ENCODE measurements at regions of chr1 and their contacts with region 1.

Region 1: DNA sequence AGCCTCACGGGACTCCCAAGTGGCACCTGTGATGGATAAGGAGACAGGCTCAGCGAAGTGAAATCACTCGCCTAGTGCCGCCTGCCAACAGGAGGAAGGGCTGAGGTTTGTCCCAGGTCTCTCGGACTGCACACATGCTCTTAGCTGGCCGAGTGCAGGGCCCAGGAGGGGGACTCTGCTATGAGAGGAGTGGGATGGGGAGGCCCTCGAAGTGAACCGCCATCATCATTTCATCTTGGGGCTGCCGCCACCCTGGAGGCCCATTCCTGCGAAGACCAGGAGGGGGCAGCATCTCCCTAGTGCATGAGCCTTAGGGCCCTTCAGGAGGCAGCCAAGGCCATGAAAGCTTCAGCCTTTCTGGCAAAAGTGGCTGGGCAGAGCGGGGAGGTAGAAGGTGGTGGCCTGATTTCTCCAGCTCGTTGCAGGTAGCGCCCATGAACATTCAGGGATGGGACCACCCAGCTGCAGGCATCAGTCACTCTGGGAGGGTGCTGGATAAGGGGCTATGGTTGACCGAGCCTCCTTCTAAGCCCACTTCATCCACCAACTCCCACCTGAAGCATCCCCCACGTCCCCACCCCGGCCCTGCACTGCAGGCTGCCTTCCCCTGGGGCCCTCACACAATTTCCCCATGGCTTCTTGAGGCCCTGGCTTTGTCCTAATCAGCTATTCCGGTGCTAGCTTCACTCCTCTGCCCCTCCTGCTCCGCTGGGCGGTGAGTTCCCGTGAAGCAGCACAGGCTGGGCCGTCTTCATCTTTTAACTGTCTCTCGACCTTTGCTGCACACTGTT is 17.2 kb upstream of the RASSF5 start:
- DNase-seq: peak; percentile 63 to 82
- H3K4me3 ChIP-seq: no peak overlapping the region
- H3K4me3 Mint-ChIP-seq: no peak overlapping the region
- H3K27ac Mint-ChIP-seq: no peak overlapping the region
- H3K4me1 ChIP-seq: peaks cover 3% of the 10 kb centered on the region; the same call in 1 of the 2 replicates
- H3K4me1 Mint-ChIP-seq: peaks cover 4% of the 10 kb centered on the region
- H3K27me3 ChIP-seq: no peaks in the 10 kb centered on the region
- H3K27me3 Mint-ChIP-seq: no peaks in the 10 kb centered on the region
- CTCF ChIP-seq: peak; percentile 90 to 95

Region 2: GRCh38 chr1:206419250-206419649 is 70.9 kb before region 1 on chr1:
- CTCF ChIA-PET with region 1: no interaction called
- POLR2A ChIA-PET with region 1: no interaction called
- intact Hi-C with region 1: no loop called
- DNase-seq: no peak
- H3K4me3 ChIP-seq: no peak overlapping the region
- H3K4me3 Mint-ChIP-seq: no peak overlapping the region
- H3K27ac Mint-ChIP-seq: no peak overlapping the region
- H3K4me1 ChIP-seq: peaks cover 5% of the 10 kb centered on the region; the same call in 1 of the 2 replicates
- H3K4me1 Mint-ChIP-seq: peaks cover 7% of the 10 kb centered on the region
- H3K27me3 ChIP-seq: no peaks in the 10 kb centered on the region
- H3K27me3 Mint-ChIP-seq: no peaks in the 10 kb centered on the region
- CTCF ChIP-seq: no peak

Region 3: GRCh38 chr1:206479183-206480125 is 10.7 kb before region 1 on chr1:
- CTCF ChIA-PET with region 1: interaction called, 10 read pairs
- POLR2A ChIA-PET with region 1: no interaction called
- intact Hi-C with region 1: no loop called
- DNase-seq: peak; percentile 65 to 68
- H3K4me3 ChIP-seq: no peak overlapping the region
- H3K4me3 Mint-ChIP-seq: no peak overlapping the region
- H3K27ac Mint-ChIP-seq: no peak overlapping the region
- H3K4me1 ChIP-seq: no peaks in the 10 kb centered on the region
- H3K4me1 Mint-ChIP-seq: no peaks in the 10 kb centered on the region
- H3K27me3 ChIP-seq: no peaks in the 10 kb centered on the region
- H3K27me3 Mint-ChIP-seq: no peaks in the 10 kb centered on the region
- CTCF ChIP-seq: peak; percentile 83 to 85

Region 4: DNA sequence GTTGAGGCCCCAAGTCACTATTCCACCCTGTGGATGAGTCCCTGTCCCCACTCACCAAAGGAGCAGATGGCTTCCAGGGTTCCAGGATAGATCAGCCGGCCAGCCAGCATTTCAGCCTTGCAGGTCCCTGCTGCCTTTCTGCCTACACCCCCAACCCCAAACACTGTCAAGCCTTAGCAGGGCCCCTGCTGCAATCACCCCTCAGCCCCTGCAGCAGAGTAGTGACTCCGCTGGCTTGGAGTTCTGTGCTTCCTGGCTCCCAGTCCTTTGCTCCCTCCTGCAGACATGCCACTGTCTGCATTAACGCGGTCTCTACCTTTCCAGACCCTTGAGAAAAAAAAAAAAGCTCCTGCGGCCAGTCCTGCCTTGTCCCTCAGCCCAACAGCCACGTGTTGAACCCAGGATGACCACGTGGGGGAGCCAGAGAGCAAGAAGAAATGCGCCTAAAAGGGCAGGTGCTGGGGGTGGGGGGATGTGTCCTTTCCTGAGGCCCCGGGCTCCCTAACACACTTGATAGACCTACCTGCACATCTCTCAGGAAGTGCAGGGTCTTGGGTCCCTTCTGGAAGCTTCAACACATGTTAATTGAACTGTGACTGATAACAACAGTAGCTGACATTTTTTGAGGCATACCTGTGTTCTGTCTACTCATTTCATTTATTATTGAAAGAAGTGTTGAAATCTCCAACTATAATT is 54.5 kb after region 1 on chr1:
- CTCF ChIA-PET with region 1: interaction called, 7 read pairs
- POLR2A ChIA-PET with region 1: no interaction called
- intact Hi-C with region 1: loop called (anchors 1 kb)
- DNase-seq: peak; percentile 77 to 89
- H3K4me3 ChIP-seq: no peak overlapping the region
- H3K4me3 Mint-ChIP-seq: no peak overlapping the region
- H3K27ac Mint-ChIP-seq: no peak overlapping the region
- H3K4me1 ChIP-seq: no peaks in the 10 kb centered on the region
- H3K4me1 Mint-ChIP-seq: no peaks in the 10 kb centered on the region
- H3K27me3 ChIP-seq: no peaks in the 10 kb centered on the region
- H3K27me3 Mint-ChIP-seq: peaks cover 7% of the 10 kb centered on the region
- CTCF ChIP-seq: peak; percentile 80 to 94

Region 5: DNA sequence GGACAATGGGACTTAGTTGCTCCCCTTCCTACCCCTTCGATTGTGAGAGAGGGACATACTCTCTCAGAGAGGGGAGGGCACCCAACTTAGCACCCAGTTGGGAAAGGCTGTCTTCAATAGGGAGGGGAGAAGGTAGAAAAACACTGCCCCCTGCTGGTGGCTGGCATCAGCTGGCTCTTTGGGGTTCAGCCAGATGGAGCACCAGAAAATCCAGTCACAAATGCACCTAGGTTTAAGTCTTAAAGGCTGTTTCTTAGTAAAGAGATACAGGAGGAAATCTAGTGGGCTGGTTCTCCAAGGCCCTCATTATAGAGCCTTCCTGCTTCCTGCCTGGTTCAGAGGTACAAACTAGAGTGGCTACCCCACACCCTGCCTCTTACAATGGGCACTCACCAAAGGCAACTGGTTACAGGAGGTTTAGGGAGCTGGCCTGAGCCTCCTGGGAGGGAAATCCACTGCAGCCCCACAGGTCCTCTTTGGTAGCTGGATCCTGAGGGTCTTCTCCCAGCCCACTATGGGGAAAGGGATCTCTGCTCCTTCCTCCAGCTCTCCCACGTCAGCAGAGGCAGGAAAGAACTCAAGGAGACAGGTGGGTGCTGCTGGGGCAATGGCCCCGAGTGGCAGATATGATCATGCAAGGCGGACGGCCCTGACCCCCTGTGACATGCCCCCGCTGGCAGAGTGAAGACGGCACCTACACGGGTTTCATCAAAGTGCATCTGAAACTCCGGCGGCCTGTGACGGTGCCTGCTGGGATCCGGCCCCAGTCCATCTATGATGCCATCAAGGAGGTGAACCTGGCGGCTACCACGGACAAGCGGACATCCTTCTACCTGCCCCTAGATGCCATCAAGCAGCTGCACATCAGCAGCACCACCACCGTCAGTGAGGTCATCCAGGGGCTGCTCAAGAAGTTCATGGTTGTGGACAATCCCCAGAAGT is 93.8 kb after region 1 on chr1:
- CTCF ChIA-PET with region 1: interaction called, 20 read pairs
- POLR2A ChIA-PET with region 1: no interaction called
- intact Hi-C with region 1: loop called (anchors 1 kb)
- DNase-seq: peak; percentile 65 to 78
- H3K4me3 ChIP-seq: no peak overlapping the region
- H3K4me3 Mint-ChIP-seq: no peak overlapping the region
- H3K27ac Mint-ChIP-seq: no peak overlapping the region
- H3K4me1 ChIP-seq: no peaks in the 10 kb centered on the region
- H3K4me1 Mint-ChIP-seq: no peaks in the 10 kb centered on the region
- H3K27me3 ChIP-seq: no peaks in the 10 kb centered on the region
- H3K27me3 Mint-ChIP-seq: no peaks in the 10 kb centered on the region
- CTCF ChIP-seq: peak; percentile 82

Region 6: GRCh38 chr1:207097871-207098324 is 607.7 kb after region 1 on chr1:
- CTCF ChIA-PET with region 1: no interaction called
- POLR2A ChIA-PET with region 1: no interaction called
- intact Hi-C with region 1: no loop called
- DNase-seq: no peak
- H3K4me3 ChIP-seq: no peak overlapping the region
- H3K4me3 Mint-ChIP-seq: no peak overlapping the region
- H3K27ac Mint-ChIP-seq: no peak overlapping the region
- H3K4me1 ChIP-seq: peaks cover 6% of the 10 kb centered on the region; the same call in 1 of the 2 replicates
- H3K4me1 Mint-ChIP-seq: peaks cover 19% of the 10 kb centered on the region
- H3K27me3 ChIP-seq: no peaks in the 10 kb centered on the region
- H3K27me3 Mint-ChIP-seq: no peaks in the 10 kb centered on the region
- CTCF ChIP-seq: no peak